Endothelial cell of umbilical vein (primary cell): ENCODE measurements at regions of chr3 and their contacts with region 1.

Region 1: GRCh38 chr3:138915503-138916498 is 31.1 kb downstream of the FOXL2 start:
- DNase-seq: peak; percentile 88
- H3K4me3 ChIP-seq: peak overlapping the region; percentile 12 to 81 (median 64)
- H3K27ac ChIP-seq: peak overlapping the region; percentile 74
- H3K4me1 ChIP-seq: peaks cover 8% of the 10 kb centered on the region
- H3K27me3 ChIP-seq: no peaks in the 10 kb centered on the region
- CTCF ChIP-seq: peak; percentile 92 to 97
- POLR2A ChIP-seq: no peak

Region 2: DNA sequence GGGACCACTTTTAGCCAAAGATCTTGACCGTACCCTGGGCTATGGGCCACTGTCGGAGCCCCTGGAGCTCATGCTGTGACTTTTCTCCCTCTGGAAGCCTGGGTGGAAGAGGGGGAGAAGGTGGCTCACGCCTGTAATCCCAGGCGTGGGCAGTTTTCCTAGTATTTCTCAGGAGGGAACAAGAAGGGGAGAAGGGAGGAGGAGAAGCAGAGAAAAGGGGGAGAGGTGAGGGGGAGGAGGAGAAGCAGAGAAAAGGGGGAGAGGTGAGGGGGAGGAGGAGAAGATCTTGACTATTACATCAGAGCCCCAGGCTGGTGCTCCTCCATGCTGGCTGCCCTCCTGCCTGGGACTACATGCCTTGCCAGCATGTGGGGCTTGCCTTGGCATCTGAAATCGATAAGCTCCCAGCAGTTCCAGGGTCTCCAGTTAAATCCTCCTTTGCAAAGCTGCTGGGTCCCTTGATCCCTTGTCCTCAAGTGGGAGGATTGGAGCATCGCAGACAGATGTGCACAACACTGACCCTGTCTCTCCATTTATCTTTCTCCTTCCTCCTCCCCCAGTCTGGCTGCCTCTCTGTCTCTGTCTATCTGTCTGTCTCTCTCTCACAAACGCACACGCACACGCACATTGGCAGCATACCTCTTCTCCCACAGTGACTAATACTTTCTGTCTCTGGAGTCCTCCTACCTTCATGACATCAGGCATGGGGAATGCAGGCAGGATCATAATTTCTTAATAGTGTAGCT is 525.8 kb before region 1 on chr3:
- CTCF ChIA-PET with region 1: no interaction called
- POLR2A ChIA-PET with region 1: no interaction called
- dilution Hi-C with region 1: no loop called
- intact Hi-C with region 1: no loop called
- DNase-seq: no peak
- H3K4me3 ChIP-seq: no peak overlapping the region
- H3K27ac ChIP-seq: no peak overlapping the region
- H3K4me1 ChIP-seq: no peaks in the 10 kb centered on the region
- H3K27me3 ChIP-seq: no peaks in the 10 kb centered on the region
- CTCF ChIP-seq: no peak
- POLR2A ChIP-seq: no peak

Region 3: DNA sequence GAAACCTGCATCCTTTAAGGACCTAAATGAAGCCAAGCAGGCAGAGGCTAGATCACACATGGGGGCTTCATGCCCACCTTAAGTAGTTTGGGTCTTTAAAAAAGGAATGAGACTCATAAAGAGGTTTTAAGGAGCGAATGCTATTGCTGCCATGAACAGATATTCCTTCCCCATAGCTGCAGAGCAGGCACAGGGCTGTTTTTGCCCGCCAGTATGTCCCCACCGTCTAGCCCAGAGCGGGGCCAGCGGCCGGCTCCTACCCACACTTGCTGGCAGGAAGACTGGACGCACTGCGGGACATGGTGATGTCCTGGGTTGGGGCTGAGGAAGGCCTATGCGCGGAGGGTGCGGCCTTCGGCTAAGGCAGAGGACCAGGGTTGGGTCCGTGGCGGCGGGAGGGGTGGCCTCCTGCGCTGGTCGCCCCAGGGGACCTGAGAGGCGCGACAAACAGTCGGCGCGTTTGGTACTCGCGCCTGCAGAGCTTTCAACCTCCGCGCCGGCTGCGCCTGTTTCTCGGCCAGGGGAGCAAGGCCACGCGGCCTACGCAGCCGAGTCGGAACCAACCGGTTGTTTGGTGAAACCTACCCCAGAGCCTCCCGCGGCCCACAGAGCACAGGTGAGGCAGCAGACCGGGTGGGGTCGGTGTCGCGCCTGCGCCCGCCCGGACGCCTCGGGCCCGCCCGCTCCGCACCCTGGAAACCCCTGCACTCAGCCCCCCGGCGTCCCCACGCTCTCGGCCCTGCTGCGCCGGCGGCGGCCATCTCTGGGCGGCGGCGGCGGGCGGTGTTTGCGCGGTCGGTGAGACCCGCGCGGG is 307.3 kb before region 1 on chr3 and contains the start of gene FAIM:
- CTCF ChIA-PET with region 1: interaction called, 15 read pairs
- POLR2A ChIA-PET with region 1: no interaction called
- dilution Hi-C with region 1: no loop called
- intact Hi-C with region 1: loop called (anchors 1 kb)
- DNase-seq: peak; percentile 77
- H3K4me3 ChIP-seq: peak within 1 kb of the TSS; percentile 45 to 86 (median 69)
- H3K27ac ChIP-seq: peak within 1 kb of the TSS; percentile 66
- H3K4me1 ChIP-seq: peaks cover 4% of the 10 kb centered on the region
- H3K27me3 ChIP-seq: no peaks in the 10 kb centered on the region
- CTCF ChIP-seq: no peak
- POLR2A ChIP-seq: peak; percentile 10
- total RNA-seq, gene FAIM: 9.9 and 11.9 TPM in 2 replicates

Region 4: DNA sequence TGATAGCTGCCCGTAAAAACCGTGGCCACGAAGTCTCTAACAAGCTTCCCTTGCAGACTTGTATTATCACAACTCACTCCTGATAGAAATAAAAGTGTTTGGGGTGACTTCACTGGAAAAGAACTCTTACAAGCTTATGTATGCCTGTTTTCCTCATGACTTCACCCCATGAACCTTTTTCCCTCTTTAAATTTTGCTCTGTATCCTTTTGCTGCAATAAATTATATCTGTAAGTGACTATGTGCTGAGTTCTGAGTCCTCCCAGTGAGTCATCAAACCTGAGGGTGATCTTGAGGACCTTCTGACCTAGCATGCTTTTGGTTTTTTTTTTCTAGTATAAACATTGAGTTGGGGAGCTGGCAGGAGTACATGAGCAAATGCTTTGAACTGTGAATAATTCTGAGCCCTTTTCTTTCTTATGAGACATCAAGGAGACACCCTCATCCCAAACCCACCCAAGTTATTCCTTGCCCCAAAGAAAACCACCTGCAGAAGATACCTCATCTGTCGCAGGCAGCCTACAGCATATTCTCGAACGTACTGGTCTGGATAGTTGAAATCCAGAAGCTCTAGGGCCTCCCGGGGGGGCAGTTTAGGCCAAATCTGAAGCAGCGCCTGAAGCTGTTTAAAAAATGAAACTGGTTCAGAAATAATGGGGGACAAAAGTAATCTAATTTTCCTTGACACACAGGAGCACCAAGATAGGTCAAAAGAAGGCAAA is 221.4 kb before region 1 on chr3:
- CTCF ChIA-PET with region 1: interaction called, 862 read pairs
- POLR2A ChIA-PET with region 1: interaction called, 6 read pairs
- dilution Hi-C with region 1: no loop called
- intact Hi-C with region 1: loop called (anchors 1 kb)
- DNase-seq: peak; percentile 58
- H3K4me3 ChIP-seq: no peak overlapping the region
- H3K27ac ChIP-seq: no peak overlapping the region
- H3K4me1 ChIP-seq: no peaks in the 10 kb centered on the region
- H3K27me3 ChIP-seq: no peaks in the 10 kb centered on the region
- CTCF ChIP-seq: no peak
- POLR2A ChIP-seq: no peak

Region 5: GRCh38 chr3:138747225-138747624 is 168.6 kb before region 1 on chr3:
- CTCF ChIA-PET with region 1: interaction called, 11 read pairs
- POLR2A ChIA-PET with region 1: no interaction called
- dilution Hi-C with region 1: no loop called
- intact Hi-C with region 1: no loop called
- DNase-seq: no peak
- H3K4me3 ChIP-seq: no peak overlapping the region
- H3K27ac ChIP-seq: no peak overlapping the region
- H3K4me1 ChIP-seq: peaks cover under 1% of the 10 kb centered on the region
- H3K27me3 ChIP-seq: no peaks in the 10 kb centered on the region
- CTCF ChIP-seq: no peak
- POLR2A ChIP-seq: no peak

Region 6: GRCh38 chr3:138797508-138798038 is 118.2 kb before region 1 on chr3:
- CTCF ChIA-PET with region 1: interaction called, 17 read pairs
- POLR2A ChIA-PET with region 1: no interaction called
- dilution Hi-C with region 1: no loop called
- intact Hi-C with region 1: no loop called
- DNase-seq: no peak
- H3K4me3 ChIP-seq: no peak overlapping the region
- H3K27ac ChIP-seq: no peak overlapping the region
- H3K4me1 ChIP-seq: no peaks in the 10 kb centered on the region
- H3K27me3 ChIP-seq: no peaks in the 10 kb centered on the region
- CTCF ChIP-seq: no peak
- POLR2A ChIP-seq: no peak

Region 7: GRCh38 chr3:138850151-138850550 is 65.7 kb before region 1 on chr3:
- CTCF ChIA-PET with region 1: interaction called, 17 read pairs
- POLR2A ChIA-PET with region 1: interaction called, 5 read pairs
- dilution Hi-C with region 1: no loop called
- intact Hi-C with region 1: no loop called
- DNase-seq: peak; percentile 40
- H3K4me3 ChIP-seq: no peak overlapping the region
- H3K27ac ChIP-seq: no peak overlapping the region
- H3K4me1 ChIP-seq: peaks cover 5% of the 10 kb centered on the region
- H3K27me3 ChIP-seq: no peaks in the 10 kb centered on the region
- CTCF ChIP-seq: no peak
- POLR2A ChIP-seq: no peak

Region 8: DNA sequence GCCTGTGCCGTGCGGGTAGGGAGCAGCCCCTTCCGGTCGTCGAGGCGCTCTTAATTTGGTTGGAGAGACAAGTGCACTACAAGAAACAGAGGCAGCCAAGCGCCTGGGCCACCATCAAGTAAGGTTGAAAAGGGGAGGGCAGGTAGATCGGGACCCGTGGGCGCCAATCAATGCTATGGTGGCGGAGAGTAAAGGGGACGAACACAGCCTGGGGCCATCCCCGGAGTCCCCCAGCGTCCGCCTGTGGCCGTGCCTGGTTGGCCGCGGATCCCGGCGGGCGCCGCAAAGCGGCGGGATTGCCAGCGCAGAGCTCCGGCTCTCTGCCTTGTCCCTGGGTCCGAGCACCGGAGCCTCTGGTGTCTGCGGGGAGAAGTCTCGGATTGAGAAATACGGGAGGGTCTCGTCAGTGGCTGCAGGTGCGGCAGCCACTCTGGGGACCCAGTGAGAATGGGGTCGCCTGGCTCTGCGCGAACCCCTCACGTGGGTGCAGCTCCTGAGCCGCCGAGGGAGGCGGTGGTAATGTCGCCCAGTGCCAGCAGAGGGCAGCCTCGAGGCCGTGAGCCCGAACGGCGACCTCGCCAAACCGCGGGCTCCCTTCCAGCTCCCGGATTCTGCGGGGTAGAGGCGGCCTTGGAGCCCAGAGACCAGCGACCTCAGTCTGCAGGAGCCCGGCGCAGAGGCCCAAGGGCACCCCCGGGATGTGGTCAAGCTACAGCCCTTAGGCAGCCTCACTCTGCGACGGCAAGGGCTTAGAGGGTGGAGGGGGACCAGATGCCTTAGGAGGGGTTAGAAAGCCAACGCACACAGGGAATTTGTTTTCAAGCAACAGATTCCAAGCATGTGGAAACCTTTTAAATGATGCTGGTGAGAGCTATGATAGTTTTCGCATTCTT is 20.3 kb after region 1 on chr3:
- CTCF ChIA-PET with region 1: interaction called, 59 read pairs
- POLR2A ChIA-PET with region 1: no interaction called
- dilution Hi-C with region 1: no loop called
- intact Hi-C with region 1: no loop called
- DNase-seq: peak; percentile 59
- H3K4me3 ChIP-seq: peak overlapping the region in 2 of 3 experiments; percentile 0 to 25
- H3K27ac ChIP-seq: no peak overlapping the region
- H3K4me1 ChIP-seq: peaks cover 7% of the 10 kb centered on the region
- H3K27me3 ChIP-seq: peaks cover 54 to 66% of the 10 kb centered on the region in 2 experiments
- CTCF ChIP-seq: peak; percentile 84 to 94
- POLR2A ChIP-seq: no peak